Activated T-helper 1 cell treated with anti-CD3 and anti-CD28 coated beads, Interleukin-12 subunit alpha, Interleukin-12 subunit beta, Interleukin-2, Interleukin-4 antibody, amounts not matched to agents 30 ng/mL and 10 ng/mL and 1 ng/mL, durations not matched to agents 14 hours and 24 hours and 36 hours (primary cell): ENCODE measurements at regions of chr11 and their contacts with region 1.

Region 1: DNA sequence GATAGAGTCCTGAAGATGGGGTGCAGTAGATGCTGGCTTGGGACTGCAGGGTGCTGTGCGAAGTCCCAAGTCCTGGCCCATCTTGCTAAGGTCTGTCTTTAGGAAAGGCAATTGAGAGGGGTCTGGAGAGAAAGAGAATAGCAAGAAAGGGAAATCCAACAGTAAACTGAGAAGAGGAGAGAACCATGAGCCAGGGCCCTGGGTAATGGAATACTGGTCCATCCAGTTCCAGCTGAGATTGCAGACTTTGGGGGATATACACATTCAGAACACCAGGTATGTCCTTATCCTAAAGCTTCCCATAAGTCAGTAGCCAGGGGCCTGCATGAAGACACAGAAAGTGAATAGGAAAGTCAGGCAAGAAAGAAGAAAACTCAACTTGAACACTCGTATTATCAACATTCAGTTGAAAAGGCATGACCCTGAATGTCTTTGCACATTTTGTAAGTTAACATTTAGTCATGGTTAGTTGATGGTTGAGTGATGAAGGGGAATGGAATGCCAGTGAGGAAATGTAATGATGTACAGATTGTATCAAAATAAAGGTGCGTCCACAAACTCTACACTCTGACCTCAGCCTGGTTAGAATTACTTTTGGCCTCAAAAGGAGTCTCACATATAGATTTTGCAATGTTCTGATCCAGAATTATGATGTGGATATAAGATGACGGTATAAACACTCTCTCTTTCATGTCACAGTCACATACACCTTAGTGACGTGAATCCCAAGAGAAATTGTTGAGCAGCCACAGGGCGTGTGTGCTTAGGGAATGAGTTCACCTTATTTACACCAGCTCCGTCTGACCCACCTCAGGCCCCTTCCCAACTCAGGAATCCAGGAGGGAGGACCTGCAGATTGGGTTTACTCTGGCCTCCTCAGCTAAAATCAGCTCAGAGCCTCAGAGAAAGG is 100.3 kb downstream of the RDX start:
- DNase-seq: no peak
- H3K4me3 Mint-ChIP-seq: no peak overlapping the region
- H3K27ac Mint-ChIP-seq: no peak overlapping the region
- H3K4me1 Mint-ChIP-seq: peaks cover 15% of the 10 kb centered on the region
- H3K27me3 Mint-ChIP-seq: peaks cover 34% of the 10 kb centered on the region

Region 2: DNA sequence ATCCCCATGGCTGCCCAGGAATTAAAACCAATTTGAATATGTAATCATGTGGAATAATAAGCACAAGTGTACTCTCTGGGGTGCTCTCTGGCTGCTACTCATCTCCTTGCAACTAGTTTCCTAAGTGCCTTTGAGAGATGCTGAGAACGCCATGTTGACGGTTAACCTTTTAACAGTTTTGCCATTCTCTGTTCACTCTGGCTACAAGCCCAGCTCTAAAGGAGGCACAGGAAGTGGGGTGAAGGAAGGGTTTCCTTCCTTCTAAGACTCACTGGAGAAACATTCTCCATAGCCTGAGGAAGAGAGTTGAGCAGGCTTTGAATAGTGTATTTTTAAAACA is 224.9 kb before region 1 on chr11:
- intact Hi-C with region 1: loop called (anchors 2 kb)
- DNase-seq: no peak
- H3K4me3 Mint-ChIP-seq: peak overlapping the region; percentile 57
- H3K27ac Mint-ChIP-seq: peak overlapping the region; percentile 82
- H3K4me1 Mint-ChIP-seq: peaks cover 45% of the 10 kb centered on the region
- H3K27me3 Mint-ChIP-seq: peaks cover 7% of the 10 kb centered on the region

Region 3: DNA sequence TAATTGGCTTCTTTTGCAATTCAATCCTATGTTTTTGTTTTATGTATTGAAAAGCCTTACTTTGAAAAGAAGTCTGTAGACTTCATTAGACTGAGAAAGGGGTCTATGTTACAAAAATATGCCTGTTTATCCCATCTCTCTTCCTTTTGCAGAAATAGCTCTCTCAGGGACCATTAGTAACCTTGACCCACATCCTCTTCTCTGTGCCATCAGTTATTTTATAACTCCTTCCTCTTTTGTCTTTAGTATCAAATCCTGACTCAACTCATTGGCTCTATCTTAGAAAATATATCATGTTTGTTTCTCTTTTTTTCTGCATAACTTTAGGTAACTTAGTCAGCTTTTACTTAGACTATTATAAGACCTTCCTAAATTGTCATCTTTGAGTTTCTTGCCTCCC is 82.6 kb before region 1 on chr11:
- intact Hi-C with region 1: no loop called
- DNase-seq: no peak
- H3K4me3 Mint-ChIP-seq: no peak overlapping the region
- H3K27ac Mint-ChIP-seq: no peak overlapping the region
- H3K4me1 Mint-ChIP-seq: no peaks in the 10 kb centered on the region
- H3K27me3 Mint-ChIP-seq: peaks cover 14% of the 10 kb centered on the region

Region 4: DNA sequence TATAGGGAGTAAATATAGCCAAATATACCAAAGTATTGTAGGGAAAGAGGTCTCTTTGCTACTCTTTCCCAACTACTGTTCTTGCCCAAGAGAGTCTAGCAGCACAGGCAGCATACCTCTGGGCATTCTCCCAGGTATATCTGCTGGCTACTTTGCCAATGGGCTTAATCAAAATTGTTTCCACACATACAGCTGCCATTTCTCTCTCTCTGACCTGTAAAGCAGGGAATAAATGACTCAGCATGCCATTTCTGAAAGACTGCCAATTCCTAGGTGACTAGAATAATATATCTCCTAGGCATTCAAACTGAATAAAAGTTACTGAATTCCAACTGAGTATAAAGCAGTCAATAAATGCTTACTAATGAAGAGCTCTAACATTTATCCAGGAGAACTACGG is 55.7 kb after region 1 on chr11:
- intact Hi-C with region 1: loop called (anchors 5 kb)
- DNase-seq: no peak
- H3K4me3 Mint-ChIP-seq: no peak overlapping the region
- H3K27ac Mint-ChIP-seq: peak overlapping the region; percentile 40
- H3K4me1 Mint-ChIP-seq: peaks cover 14% of the 10 kb centered on the region
- H3K27me3 Mint-ChIP-seq: no peaks in the 10 kb centered on the region

Region 5: GRCh38 chr11:110367571-110367970 is 171.5 kb after region 1 on chr11:
- intact Hi-C with region 1: loop called (anchors 1 kb)
- DNase-seq: no peak
- H3K4me3 Mint-ChIP-seq: no peak overlapping the region
- H3K27ac Mint-ChIP-seq: no peak overlapping the region
- H3K4me1 Mint-ChIP-seq: peaks cover 30% of the 10 kb centered on the region
- H3K27me3 Mint-ChIP-seq: peaks cover 1% of the 10 kb centered on the region

Region 6: GRCh38 chr11:110525883-110526282 is 329.8 kb after region 1 on chr11:
- intact Hi-C with region 1: loop called (anchors 5 kb)
- DNase-seq: no peak
- H3K4me3 Mint-ChIP-seq: no peak overlapping the region
- H3K27ac Mint-ChIP-seq: no peak overlapping the region
- H3K4me1 Mint-ChIP-seq: peaks cover 15% of the 10 kb centered on the region
- H3K27me3 Mint-ChIP-seq: no peaks in the 10 kb centered on the region